ENCODE measurements at regions of chr15 and their contacts with region 1.

Region 1: GRCh38 chr15:92831655-92832328 is 68.3 kb upstream of the CHD2 start:
- DNase-seq: peak; percentile 77
- ATAC-seq: peak; percentile 99
- H3K4me3 ChIP-seq: peak overlapping the region; percentile 28
- H3K27ac ChIP-seq: peak overlapping the region; percentile 99
- H3K4me1 ChIP-seq: peaks cover 42% of the 10 kb centered on the region
- H3K27me3 ChIP-seq: no peaks in the 10 kb centered on the region
- CTCF ChIP-seq: no peak

Region 2: DNA sequence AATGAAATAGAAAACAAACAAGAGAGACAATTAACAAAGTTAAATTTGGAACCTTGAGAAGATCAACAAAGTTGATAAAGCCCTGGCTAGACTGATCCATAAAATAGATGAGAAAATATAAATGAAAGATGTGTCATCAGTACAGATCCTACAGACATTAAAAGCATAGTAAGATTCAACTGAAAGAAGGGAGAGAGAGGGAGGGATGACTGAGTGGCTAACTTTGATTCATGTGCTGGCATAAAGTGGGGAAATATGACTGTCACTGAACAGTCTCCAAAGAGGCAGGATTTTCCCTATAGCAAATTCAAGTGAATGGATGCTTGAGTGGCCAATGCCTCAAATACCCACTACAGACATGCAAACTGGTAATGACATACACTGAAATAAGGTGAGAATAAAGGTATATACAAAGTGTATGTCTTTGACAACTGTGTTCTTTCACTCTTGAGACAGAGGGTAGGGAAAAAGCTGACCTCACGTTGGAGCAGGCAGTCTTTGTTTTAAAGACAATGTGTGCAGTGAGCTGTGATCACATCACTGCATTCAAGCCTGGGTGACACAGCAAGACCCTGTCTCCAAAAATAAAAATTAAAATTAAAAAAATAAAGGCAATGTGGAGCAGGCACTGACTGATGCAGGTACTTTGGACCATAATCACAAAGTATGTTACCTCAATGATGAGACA is 32.5 kb after region 1 on chr15:
- CTCF ChIA-PET with region 1: interaction called, 12 read pairs
- POLR2A ChIA-PET with region 1: no interaction called
- in situ Hi-C with region 1: no loop called
- intact Hi-C with region 1: no loop called
- DNase-seq: no peak
- ATAC-seq: no peak; the same call in 1 of the 2 replicates
- H3K4me3 ChIP-seq: no peak overlapping the region
- H3K27ac ChIP-seq: peak overlapping the region; percentile 40; the same call in 1 of the 2 replicates
- H3K4me1 ChIP-seq: peaks cover 6% of the 10 kb centered on the region
- H3K27me3 ChIP-seq: no peaks in the 10 kb centered on the region
- CTCF ChIP-seq: no peak

Region 3: DNA sequence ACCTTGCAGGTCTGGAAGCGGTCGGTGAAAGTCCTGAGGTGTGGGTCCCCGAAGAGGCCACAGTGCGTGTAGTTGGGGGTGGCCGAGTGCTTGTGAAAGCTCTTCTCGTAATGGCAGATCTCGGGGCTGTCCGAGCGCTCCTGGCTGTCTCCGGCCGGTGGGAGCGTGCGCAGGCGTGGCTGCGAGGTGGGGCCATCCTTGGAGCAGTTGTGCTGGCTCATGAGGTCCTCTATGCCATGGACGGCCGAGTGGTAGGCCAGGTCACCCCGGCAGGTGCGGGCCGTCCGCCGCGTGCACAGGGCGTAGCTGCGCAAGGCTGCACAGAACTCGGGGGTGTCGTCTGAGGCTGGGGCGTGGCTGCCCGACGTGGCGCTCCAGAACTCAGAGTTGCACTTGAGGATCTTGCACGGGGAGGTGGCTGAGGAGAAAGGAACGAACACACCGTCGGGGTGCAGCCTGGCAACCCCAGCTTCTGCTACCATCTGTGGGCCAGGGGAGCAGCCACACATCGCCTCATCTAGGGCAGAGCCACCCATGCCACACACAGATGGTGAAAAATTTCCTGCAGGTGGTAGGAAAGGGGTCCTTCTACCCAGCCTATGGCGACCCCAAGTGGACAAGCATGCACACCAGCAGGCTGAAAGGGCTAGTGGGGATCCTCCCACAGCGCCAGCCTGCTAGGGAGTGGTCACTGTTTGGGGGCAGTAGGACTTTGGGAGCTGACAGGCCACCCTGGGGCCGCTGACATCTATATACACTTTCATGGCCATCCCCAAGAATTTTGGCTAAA is 220.5 kb after region 1 on chr15:
- CTCF ChIA-PET with region 1: interaction called, 14 read pairs
- POLR2A ChIA-PET with region 1: no interaction called
- in situ Hi-C with region 1: no loop called
- intact Hi-C with region 1: no loop called
- DNase-seq: no peak
- ATAC-seq: peak; percentile 43
- H3K4me3 ChIP-seq: no peak overlapping the region
- H3K27ac ChIP-seq: no peak overlapping the region
- H3K4me1 ChIP-seq: no peaks in the 10 kb centered on the region
- H3K27me3 ChIP-seq: no peaks in the 10 kb centered on the region
- CTCF ChIP-seq: no peak

Measured in Panc1 (cell line).